ENCODE measurements at regions of chr1 and their contacts with region 1.

Region 1: GRCh38 chr1:32702599-32703478 is at the start of gene SYNC:
- DNase-seq: no peak
- H3K4me3 ChIP-seq: peak within 1 kb of the TSS; percentile 49 to 55
- H3K27ac ChIP-seq: peak within 1 kb of the TSS; percentile 75 to 78
- H3K4me1 ChIP-seq: peaks cover 12% of the 10 kb centered on the region
- H3K27me3 ChIP-seq: no peaks in the 10 kb centered on the region
- CTCF ChIP-seq: no peak
- POLR2A ChIP-seq: no peak
- total RNA-seq, gene SYNC: 7.9 to 18.2 TPM

Region 2: DNA sequence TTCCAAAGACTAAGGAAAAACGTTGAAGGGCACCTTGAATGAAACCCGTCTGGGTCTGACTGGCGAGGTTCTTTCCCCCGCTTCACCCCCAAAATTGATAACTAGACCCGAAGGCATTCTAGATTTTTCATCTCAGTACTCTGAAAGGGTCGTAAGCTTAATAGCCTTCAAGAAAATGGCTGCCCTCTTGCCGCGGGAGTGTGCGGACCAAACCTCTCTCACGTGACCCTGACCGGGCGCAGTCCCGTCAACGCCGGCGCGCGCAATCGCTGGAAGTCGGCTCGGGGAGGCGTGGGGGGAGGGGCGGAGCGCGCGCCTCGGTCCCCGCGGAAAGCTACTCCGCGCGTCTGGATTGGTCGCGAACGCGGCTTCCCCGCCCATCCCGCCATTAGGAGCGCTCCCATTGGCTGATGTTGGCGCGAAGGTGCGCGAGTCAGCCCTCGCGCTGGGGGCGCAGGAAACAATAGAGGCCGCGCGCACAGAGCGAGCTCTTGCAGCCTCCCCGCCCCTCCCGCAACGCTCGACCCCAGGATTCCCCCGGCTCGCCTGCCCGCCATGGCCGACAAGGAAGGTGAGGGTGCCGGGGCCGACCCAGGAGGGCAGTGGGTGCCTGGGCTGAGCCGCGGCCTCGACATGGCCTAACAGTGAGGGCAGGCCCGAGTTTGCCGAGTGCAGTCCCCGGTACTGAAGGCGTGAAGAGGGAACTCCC is 51.9 kb before region 1 on chr1 and contains the start of gene RBBP4:
- intact Hi-C with region 1: loop called (anchors 2 kb)
- DNase-seq: peak; percentile 98
- H3K4me3 ChIP-seq: peak within 1 kb of the TSS; percentile 87
- H3K27ac ChIP-seq: peak within 1 kb of the TSS; percentile 100
- H3K4me1 ChIP-seq: peaks cover 9% of the 10 kb centered on the region
- H3K27me3 ChIP-seq: no peaks in the 10 kb centered on the region
- CTCF ChIP-seq: peak in 2 of 4 experiments; percentile 3 to 14
- POLR2A ChIP-seq: peak; percentile 84
- total RNA-seq, gene RBBP4: 122 to 183 TPM

Region 3: GRCh38 chr1:32939655-32940371 is 237.0 kb after region 1 on chr1:
- intact Hi-C with region 1: no loop called
- DNase-seq: no peak
- H3K4me3 ChIP-seq: no peak overlapping the region
- H3K27ac ChIP-seq: no peak overlapping the region
- H3K4me1 ChIP-seq: peaks cover 3% of the 10 kb centered on the region
- H3K27me3 ChIP-seq: no peaks in the 10 kb centered on the region
- CTCF ChIP-seq: no peak
- POLR2A ChIP-seq: peak; percentile 10

Measured in prostate gland (tissue), 2 donors.